Posterior vena cava (tissue), 2 donors: ENCODE measurements at regions of chr1 and their contacts with region 1.

Region 1: GRCh38 chr1:164558461-164559341 is at the start of gene PBX1:
- DNase-seq: peak; percentile 99
- total RNA-seq, gene PBX1: 84.2 to 146 TPM

Region 2: DNA sequence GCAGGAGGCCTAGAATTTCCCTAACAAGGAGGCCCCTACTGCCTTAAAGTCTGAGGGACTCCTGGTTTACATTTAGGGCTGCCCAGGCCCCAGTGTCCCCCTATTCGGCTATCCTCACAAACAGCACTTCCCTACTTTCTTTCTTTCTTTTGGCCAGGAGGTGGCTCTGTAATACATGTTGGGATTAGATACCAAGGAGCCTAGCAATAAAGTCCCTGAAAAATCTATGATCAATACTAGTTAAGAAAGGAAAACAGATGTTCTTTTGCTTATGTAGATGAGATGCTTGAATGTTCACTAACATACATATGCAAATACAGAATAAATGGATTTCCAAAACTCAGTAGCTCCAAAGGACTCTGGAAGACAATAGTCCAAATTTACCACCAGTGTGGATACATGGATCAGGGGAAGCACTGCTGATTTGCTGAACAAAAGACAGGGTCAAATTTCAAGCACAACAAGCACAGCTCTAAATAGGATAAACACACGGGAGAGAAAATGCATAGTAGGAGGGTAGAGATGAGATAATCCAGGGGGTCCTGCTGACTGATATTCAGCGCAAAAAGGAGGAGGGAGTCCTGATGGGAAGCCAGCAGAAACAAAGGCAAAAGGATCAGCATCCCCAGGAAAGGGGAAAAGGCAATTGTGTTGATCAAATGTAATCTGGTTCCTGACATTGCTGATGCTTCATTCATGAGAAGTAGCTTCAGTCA is 997.0 kb before region 1 on chr1:
- intact Hi-C with region 1: loop called in 1 of 2 experiments (anchors 5 kb)
- DNase-seq: no peak

Region 3: GRCh38 chr1:164617377-164618201 is 58.9 kb after region 1 on chr1:
- intact Hi-C with region 1: loop called in 1 of 2 experiments (anchors 10 kb)
- DNase-seq: no peak

Region 4: GRCh38 chr1:164651351-164651951 is 92.8 kb after region 1 on chr1:
- intact Hi-C with region 1: no loop called
- DNase-seq: no peak

Region 5: GRCh38 chr1:164786980-164787833 is 228.5 kb after region 1 on chr1:
- intact Hi-C with region 1: loop called in 1 of 2 experiments (anchors 10 kb)
- DNase-seq: peak; percentile 93